ENCODE measurements at regions of chr16 and their contacts with region 1.

Region 1: DNA sequence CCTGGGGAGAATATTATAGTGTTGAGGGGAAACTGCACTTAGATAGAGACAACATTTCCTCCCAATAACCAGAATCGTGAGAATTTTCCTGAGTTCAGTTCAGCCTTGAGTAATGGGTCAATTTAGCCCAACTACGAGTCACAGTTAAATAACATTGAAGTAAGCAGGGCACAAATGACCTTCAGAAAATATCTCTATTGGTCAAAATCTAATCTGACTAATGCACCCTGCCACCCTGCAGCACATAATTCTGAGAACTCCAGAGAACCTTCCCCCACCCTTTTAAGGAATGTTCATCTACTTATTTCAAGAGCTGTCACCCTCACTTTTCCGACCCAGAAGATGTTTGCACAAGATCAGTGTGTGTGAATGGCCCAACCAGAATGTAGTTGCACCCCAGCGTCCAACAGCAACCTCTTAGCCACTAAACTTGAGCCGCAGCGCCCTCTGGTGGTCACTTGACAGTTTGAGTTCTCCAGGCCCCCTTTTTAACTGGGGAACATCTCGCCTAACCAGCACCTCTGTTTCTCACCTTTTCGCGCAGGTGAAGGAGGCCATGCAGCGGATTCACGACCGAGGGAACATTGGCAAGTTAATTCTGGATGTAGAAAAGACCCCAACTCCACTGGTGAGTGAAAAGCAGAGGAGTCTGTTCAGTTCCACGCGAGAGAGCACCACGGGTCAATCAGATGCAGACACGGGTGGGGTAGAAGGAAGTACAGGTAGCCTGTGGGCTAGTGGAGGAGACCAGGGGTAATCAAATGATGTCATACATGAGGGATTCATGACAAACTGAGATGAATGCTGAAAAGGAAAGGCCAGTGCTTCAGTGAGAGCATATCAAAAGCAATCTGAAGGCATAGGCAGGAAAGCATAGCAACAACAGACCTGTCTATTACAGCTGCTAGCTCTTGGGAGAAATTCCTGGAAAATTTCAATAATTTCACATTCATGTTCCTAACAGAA is 50.8 kb upstream of the CLEC3A start:
- DNase-seq: peak; percentile 82
- H3K4me3 Mint-ChIP-seq: no peak overlapping the region
- H3K27ac Mint-ChIP-seq: no peak overlapping the region
- H3K4me1 Mint-ChIP-seq: no peaks in the 10 kb centered on the region
- H3K27me3 Mint-ChIP-seq: peaks cover 9% of the 10 kb centered on the region

Region 2: DNA sequence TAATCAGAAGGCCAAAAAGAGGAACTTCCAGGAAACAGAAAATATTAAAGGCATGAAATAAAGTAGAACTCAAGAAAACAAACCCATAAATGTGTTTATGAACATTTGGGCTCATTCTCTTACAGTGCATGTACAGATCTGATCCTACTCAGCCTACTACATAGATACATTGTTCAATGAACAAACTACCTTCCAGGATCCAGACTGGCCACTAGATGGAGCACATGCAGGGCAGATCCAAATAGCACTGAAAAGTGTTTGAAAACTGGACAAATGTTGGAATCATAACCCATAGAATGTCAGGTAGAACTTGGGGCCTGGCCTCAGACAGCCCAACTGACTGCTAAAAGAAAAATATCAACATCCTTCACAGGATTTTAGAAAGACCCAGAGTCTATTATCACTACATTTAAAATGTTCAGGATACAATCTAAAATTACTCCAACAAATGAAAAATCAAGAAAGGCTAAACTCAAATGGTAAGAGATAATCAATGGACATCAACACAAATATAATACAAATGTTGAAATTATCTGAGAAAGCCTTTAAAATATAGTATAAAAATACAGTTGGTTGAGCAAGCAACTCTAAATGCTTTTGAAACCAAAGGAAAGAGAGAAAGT is 371.7 kb before region 1 on chr16:
- CTCF ChIA-PET with region 1: no interaction called
- POLR2A ChIA-PET with region 1: no interaction called
- intact Hi-C with region 1: loop called (anchors 1 kb)
- DNase-seq: peak; percentile 25
- H3K4me3 Mint-ChIP-seq: no peak overlapping the region
- H3K27ac Mint-ChIP-seq: no peak overlapping the region
- H3K4me1 Mint-ChIP-seq: no peaks in the 10 kb centered on the region
- H3K27me3 Mint-ChIP-seq: peaks cover 15% of the 10 kb centered on the region

Region 3: GRCh38 chr16:77937473-77938149 is 34.0 kb before region 1 on chr16:
- CTCF ChIA-PET with region 1: no interaction called
- POLR2A ChIA-PET with region 1: no interaction called
- intact Hi-C with region 1: no loop called
- DNase-seq: no peak
- H3K4me3 Mint-ChIP-seq: no peak overlapping the region
- H3K27ac Mint-ChIP-seq: no peak overlapping the region
- H3K4me1 Mint-ChIP-seq: no peaks in the 10 kb centered on the region
- H3K27me3 Mint-ChIP-seq: peaks cover 10% of the 10 kb centered on the region

Measured in activated CD4-positive, alpha-beta memory T cell treated with anti-CD3 and anti-CD28 coated beads for 36 hours (primary cell).